Sigmoid colon (tissue), 7 donors: ENCODE measurements at regions of chr13 and their contacts with region 1.

Region 1: GRCh38 chr13:114226699-114227323 is 7.9 kb upstream of the CDC16 start:
- DNase-seq: peak; percentile 93
- H3K4me3 ChIP-seq: no peak overlapping the region
- H3K27ac ChIP-seq: peak overlapping the region in 2 of 4 donors; percentile 28 to 41
- H3K4me1 ChIP-seq: peaks cover 0 to 16% (median 13%) of the 10 kb centered on the region in 4 donors
- H3K27me3 ChIP-seq: peaks cover 0 to 31% (median 19%) of the 10 kb centered on the region in 3 donors
- CTCF ChIP-seq: peak; percentile 86 to 99 (median 98)
- EP300 ChIP-seq: no peak
- POLR2A ChIP-seq: no peak

Region 2: GRCh38 chr13:113951246-113951999 is 275.4 kb before region 1 on chr13:
- intact Hi-C with region 1: loop called (anchors 1 kb)
- DNase-seq: peak; percentile 93
- H3K4me3 ChIP-seq: peak overlapping the region in 3 of 4 donors; percentile 25 to 36 (median 33)
- H3K27ac ChIP-seq: peak overlapping the region in 2 of 4 donors; percentile 25 to 42
- H3K4me1 ChIP-seq: peaks cover 0 to 22% (median 15%) of the 10 kb centered on the region in 4 donors
- H3K27me3 ChIP-seq: no peaks in the 10 kb centered on the region
- CTCF ChIP-seq: peak; percentile 71 to 88 (median 82)
- EP300 ChIP-seq: no peak
- POLR2A ChIP-seq: no peak

Region 3: GRCh38 chr13:114025714-114026431 is 200.9 kb before region 1 on chr13:
- intact Hi-C with region 1: loop called (anchors 5 kb)
- DNase-seq: peak; percentile 83
- H3K4me3 ChIP-seq: no peak overlapping the region
- H3K27ac ChIP-seq: peak overlapping the region; percentile 31 to 81 (median 68)
- H3K4me1 ChIP-seq: peaks cover 0 to 37% (median 29%) of the 10 kb centered on the region in 4 donors
- H3K27me3 ChIP-seq: no peaks in the 10 kb centered on the region
- CTCF ChIP-seq: no peak
- EP300 ChIP-seq: no peak
- POLR2A ChIP-seq: no peak

Region 4: GRCh38 chr13:114065141-114065925 is 161.5 kb before region 1 on chr13:
- intact Hi-C with region 1: loop called (anchors 5 kb)
- DNase-seq: peak; percentile 96
- H3K4me3 ChIP-seq: peak overlapping the region in 3 of 4 donors; percentile 37 to 45 (median 43)
- H3K27ac ChIP-seq: peak overlapping the region; percentile 90 to 98 (median 96)
- H3K4me1 ChIP-seq: peaks cover 0 to 71% (median 68%) of the 10 kb centered on the region in 4 donors
- H3K27me3 ChIP-seq: no peaks in the 10 kb centered on the region
- CTCF ChIP-seq: no peak
- EP300 ChIP-seq: peak in 2 of 4 donors; percentile 69 to 88
- POLR2A ChIP-seq: no peak

Region 5: GRCh38 chr13:114132419-114133121 is 94.2 kb before region 1 on chr13 and contains the start of gene RASA3:
- intact Hi-C with region 1: loop called (anchors 5 kb)
- DNase-seq: peak; percentile 88
- H3K4me3 ChIP-seq: peak within 1 kb of the TSS; percentile 58 to 97 (median 76)
- H3K27ac ChIP-seq: peak within 1 kb of the TSS; percentile 74 to 88 (median 84)
- H3K4me1 ChIP-seq: peaks cover 0 to 39% (median 31%) of the 10 kb centered on the region in 4 donors
- H3K27me3 ChIP-seq: no peaks in the 10 kb centered on the region
- CTCF ChIP-seq: no peak
- EP300 ChIP-seq: no peak
- POLR2A ChIP-seq: no peak
- total RNA-seq, gene RASA3: 15.0 to 22.4 (median 17.8) TPM